ENCODE measurements at regions of chr1 and their contacts with region 1.

Region 1: DNA sequence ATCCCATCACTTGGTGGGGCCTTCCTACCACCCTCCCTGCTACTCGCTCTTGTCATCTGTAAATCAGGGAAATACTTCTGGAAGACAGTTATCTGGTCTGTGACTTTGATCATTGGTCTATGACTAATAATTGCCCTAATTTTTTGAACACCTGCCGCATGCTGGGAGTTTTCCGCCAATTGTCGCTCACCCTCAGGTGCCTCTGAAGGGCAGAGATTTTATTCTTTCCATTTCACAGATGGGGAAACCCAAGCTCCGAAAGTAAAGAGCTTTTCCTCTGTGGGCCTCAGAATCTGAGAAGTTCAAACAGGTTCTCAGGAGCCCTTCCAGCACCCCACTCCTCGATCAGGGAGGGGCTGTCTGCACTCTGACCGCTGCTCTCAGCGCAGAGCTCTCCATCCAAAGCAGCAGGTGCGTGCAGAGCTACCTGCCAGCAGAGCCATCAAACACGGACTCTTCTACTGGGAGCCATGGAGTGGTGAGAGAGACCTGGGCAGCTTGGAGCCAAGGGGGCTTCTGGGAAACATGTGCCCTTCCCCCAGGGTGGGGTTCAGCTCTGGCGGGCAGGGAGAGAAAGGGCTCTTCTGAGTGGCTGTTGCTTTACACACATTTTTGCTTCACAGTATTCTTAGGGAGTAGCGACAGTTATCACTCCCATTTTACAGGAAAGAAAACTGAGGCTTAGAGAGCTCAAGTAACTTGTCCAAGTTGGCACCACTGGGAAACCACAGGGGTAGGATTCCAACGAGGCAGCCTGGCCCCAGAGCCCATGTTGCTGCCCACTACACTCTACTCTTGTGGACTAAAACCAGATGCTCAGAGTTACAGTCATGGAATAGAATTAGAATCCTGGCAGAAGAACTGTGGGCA is 5.8 kb upstream of the RUNX3 start:
- DNase-seq: no peak
- ATAC-seq: no peak
- H3K4me3 Mint-ChIP-seq: peak overlapping the region; percentile 32
- H3K27ac Mint-ChIP-seq: peak overlapping the region; percentile 46
- H3K4me1 Mint-ChIP-seq: peaks cover 47% of the 10 kb centered on the region
- H3K27me3 Mint-ChIP-seq: no peaks in the 10 kb centered on the region
- CTCF ChIP-seq: no peak

Region 2: DNA sequence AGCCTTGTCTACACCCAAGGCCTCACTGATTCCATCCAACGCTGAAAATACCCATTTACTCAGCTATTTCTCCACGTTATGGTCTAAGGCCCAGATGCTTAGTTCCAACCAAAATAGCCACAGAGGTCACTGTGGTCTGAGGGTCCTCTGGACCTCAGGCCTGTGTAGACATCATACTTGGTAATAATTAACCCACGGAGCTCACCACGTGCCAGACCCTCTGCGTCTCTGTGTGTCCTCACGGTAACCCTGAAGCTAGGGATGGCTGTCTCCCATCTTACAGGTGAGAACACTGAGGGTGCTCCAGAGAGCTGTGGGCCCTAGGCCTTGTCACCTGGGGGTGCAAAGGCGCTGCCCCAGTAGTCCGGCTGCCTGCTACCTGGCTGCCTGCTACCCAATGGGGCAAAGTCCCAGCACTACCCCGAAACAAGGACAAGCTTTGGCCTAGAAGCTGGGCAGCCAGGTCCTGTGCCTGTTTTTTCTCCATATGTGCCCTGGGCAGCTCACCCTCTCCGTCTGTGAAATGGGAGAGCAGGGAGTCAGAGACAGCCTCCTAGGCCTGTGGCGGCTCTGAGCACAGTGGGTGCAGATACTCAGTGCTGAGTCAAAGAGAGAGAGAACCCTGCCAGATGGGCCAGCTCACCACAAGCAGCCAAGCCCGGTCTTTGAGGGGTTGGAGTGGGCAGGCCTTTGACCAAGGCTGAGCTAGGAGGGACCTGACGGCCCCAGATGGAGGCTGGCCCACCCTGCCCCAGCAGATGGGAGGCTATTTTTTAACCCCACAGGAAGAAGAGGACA is 11.2 kb after region 1 on chr1:
- CTCF ChIA-PET with region 1: interaction called, 16 read pairs
- POLR2A ChIA-PET with region 1: interaction called, 15 read pairs
- intact Hi-C with region 1: loop called (anchors 1 kb)
- DNase-seq: no peak
- ATAC-seq: peak; percentile 75
- H3K4me3 Mint-ChIP-seq: no peak overlapping the region
- H3K27ac Mint-ChIP-seq: peak overlapping the region; percentile 65
- H3K4me1 Mint-ChIP-seq: peaks cover 46% of the 10 kb centered on the region
- H3K27me3 Mint-ChIP-seq: no peaks in the 10 kb centered on the region
- CTCF ChIP-seq: no peak

Region 3: DNA sequence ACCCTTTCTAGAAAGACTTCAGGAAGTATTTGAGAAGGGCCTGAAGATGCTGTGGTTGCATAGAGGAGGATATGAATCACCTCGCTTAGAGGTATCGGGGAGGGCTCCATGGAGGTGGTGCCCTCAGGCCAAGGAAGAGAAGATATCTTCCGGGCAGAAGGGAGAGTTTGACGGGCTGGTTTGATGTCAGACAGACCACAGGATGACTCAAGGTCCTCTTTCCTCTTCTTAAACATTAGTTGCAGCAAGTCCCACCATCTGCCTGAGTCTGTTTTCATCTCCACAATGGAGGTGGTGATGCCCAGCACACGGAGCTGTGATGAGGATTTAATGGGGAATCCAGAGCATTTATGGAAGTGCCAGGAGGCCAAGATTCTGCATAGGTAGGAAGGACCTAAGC is 19.3 kb after region 1 on chr1:
- CTCF ChIA-PET with region 1: interaction called, 8 read pairs
- POLR2A ChIA-PET with region 1: interaction called, 16 read pairs
- intact Hi-C with region 1: loop called (anchors 1 kb)
- DNase-seq: no peak
- ATAC-seq: peak; percentile 76
- H3K4me3 Mint-ChIP-seq: peak overlapping the region; percentile 78
- H3K27ac Mint-ChIP-seq: peak overlapping the region; percentile 87
- H3K4me1 Mint-ChIP-seq: peaks cover 87% of the 10 kb centered on the region
- H3K27me3 Mint-ChIP-seq: no peaks in the 10 kb centered on the region
- CTCF ChIP-seq: no peak

Region 4: GRCh38 chr1:24996983-24997893 is 61.4 kb after region 1 on chr1:
- CTCF ChIA-PET with region 1: no interaction called
- POLR2A ChIA-PET with region 1: no interaction called
- intact Hi-C with region 1: no loop called
- DNase-seq: no peak
- ATAC-seq: peak; percentile 49
- H3K4me3 Mint-ChIP-seq: no peak overlapping the region
- H3K27ac Mint-ChIP-seq: no peak overlapping the region
- H3K4me1 Mint-ChIP-seq: peaks cover 32% of the 10 kb centered on the region
- H3K27me3 Mint-ChIP-seq: no peaks in the 10 kb centered on the region
- CTCF ChIP-seq: no peak